HCT116 (cell line): ENCODE measurements at regions of chr5 and their contacts with region 1.

Region 1: DNA sequence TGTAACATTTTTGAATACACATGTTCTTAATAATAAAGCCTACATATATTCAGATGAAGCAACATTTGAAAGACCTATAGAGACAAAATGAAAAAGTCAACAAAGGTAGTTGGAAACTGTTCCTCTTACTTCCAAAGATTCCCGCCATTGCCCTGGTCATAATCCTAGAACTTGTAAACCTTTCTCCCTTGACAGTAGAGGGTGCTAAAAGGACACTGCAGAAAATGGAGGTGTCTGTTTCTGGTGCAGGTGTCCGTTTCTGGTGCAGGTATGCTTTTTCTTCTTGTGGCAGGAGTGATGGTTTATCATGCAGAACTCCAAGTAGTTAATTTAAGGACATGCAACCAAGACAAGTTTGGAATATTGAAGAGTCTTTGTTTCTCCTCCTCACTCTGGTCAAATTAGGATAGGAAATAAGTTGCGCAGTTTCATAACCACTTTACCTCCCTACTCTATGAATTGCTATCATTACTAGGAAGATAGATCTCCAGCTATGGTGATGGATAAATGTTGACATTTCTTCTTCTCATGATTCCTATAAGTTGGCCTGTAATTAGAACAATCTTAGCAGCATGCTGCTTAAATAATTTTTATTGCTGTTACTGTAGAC is 56.0 kb upstream of the FAM174A start:
- DNase-seq: peak; percentile 43
- ATAC-seq: peak; percentile 84
- H3K4me3 ChIP-seq: no peak overlapping the region
- H3K27ac ChIP-seq: no peak overlapping the region
- H3K4me1 ChIP-seq: no peaks in the 10 kb centered on the region
- H3K27me3 ChIP-seq: no peaks in the 10 kb centered on the region
- CTCF ChIP-seq: peak; percentile 57 to 64 (median 61); a peak in 5 of 6 replicates
- POLR2A ChIP-seq: no peak
- RAD21 ChIP-seq: peak; percentile 82

Region 2: GRCh38 chr5:100299261-100299660 is 179.9 kb before region 1 on chr5:
- CTCF ChIA-PET with region 1: no interaction called
- POLR2A ChIA-PET with region 1: no interaction called
- RAD21 ChIA-PET with region 1: no interaction called
- intact Hi-C with region 1: no loop called
- DNase-seq: no peak
- ATAC-seq: no peak
- H3K4me3 ChIP-seq: no peak overlapping the region
- H3K27ac ChIP-seq: no peak overlapping the region
- H3K4me1 ChIP-seq: no peaks in the 10 kb centered on the region
- H3K27me3 ChIP-seq: no peaks in the 10 kb centered on the region
- CTCF ChIP-seq: no peak
- POLR2A ChIP-seq: no peak
- RAD21 ChIP-seq: no peak

Region 3: GRCh38 chr5:100505984-100506670 is 26.9 kb after region 1 on chr5:
- CTCF ChIA-PET with region 1: no interaction called
- POLR2A ChIA-PET with region 1: no interaction called
- RAD21 ChIA-PET with region 1: no interaction called
- intact Hi-C with region 1: no loop called
- DNase-seq: peak; percentile 31
- ATAC-seq: peak; percentile 63; the same call in 1 of the 2 replicates
- H3K4me3 ChIP-seq: no peak overlapping the region
- H3K27ac ChIP-seq: no peak overlapping the region
- H3K4me1 ChIP-seq: peaks cover 2 to 8% of the 10 kb centered on the region in 2 experiments; a peak in 3 of 4 replicates
- H3K27me3 ChIP-seq: no peaks in the 10 kb centered on the region
- CTCF ChIP-seq: no peak
- POLR2A ChIP-seq: no peak
- RAD21 ChIP-seq: no peak

Region 4: GRCh38 chr5:101045689-101046088 is 566.5 kb after region 1 on chr5:
- CTCF ChIA-PET with region 1: no interaction called
- POLR2A ChIA-PET with region 1: no interaction called
- RAD21 ChIA-PET with region 1: no interaction called
- intact Hi-C with region 1: loop called (anchors 2 kb)
- DNase-seq: peak; percentile 15
- ATAC-seq: no peak
- H3K4me3 ChIP-seq: no peak overlapping the region
- H3K27ac ChIP-seq: no peak overlapping the region
- H3K4me1 ChIP-seq: no peaks in the 10 kb centered on the region
- H3K27me3 ChIP-seq: no peaks in the 10 kb centered on the region
- CTCF ChIP-seq: peak in 2 of 3 experiments; percentile 43 to 50; a peak in 3 of 6 replicates
- POLR2A ChIP-seq: no peak
- RAD21 ChIP-seq: peak; percentile 69

Region 5: GRCh38 chr5:101390151-101390908 is 911.1 kb after region 1 on chr5:
- CTCF ChIA-PET with region 1: interaction called, 3 read pairs
- POLR2A ChIA-PET with region 1: no interaction called
- RAD21 ChIA-PET with region 1: no interaction called
- intact Hi-C with region 1: loop called (anchors 5 kb)
- DNase-seq: peak; percentile 57
- ATAC-seq: peak; percentile 69
- H3K4me3 ChIP-seq: no peak overlapping the region
- H3K27ac ChIP-seq: no peak overlapping the region
- H3K4me1 ChIP-seq: no peaks in the 10 kb centered on the region
- H3K27me3 ChIP-seq: no peaks in the 10 kb centered on the region
- CTCF ChIP-seq: peak; percentile 31 to 73 (median 58); a peak in 5 of 6 replicates
- POLR2A ChIP-seq: no peak
- RAD21 ChIP-seq: peak; percentile 74

Region 6: GRCh38 chr5:101678481-101679193 is 1199.5 kb after region 1 on chr5:
- CTCF ChIA-PET with region 1: no interaction called
- POLR2A ChIA-PET with region 1: no interaction called
- RAD21 ChIA-PET with region 1: no interaction called
- intact Hi-C with region 1: loop called (anchors 5 kb)
- DNase-seq: peak; percentile 59
- ATAC-seq: peak; percentile 98
- H3K4me3 ChIP-seq: peak overlapping the region in 1 of 2 experiments; percentile 34; a peak in 2 of 4 replicates
- H3K27ac ChIP-seq: no peak overlapping the region
- H3K4me1 ChIP-seq: peaks cover 0 to 5% of the 10 kb centered on the region in 2 experiments; a peak in 1 of 4 replicates
- H3K27me3 ChIP-seq: no peaks in the 10 kb centered on the region
- CTCF ChIP-seq: peak; percentile 36 to 96 (median 88); a peak in 5 of 6 replicates
- POLR2A ChIP-seq: no peak
- RAD21 ChIP-seq: peak; percentile 79

Region 7: DNA sequence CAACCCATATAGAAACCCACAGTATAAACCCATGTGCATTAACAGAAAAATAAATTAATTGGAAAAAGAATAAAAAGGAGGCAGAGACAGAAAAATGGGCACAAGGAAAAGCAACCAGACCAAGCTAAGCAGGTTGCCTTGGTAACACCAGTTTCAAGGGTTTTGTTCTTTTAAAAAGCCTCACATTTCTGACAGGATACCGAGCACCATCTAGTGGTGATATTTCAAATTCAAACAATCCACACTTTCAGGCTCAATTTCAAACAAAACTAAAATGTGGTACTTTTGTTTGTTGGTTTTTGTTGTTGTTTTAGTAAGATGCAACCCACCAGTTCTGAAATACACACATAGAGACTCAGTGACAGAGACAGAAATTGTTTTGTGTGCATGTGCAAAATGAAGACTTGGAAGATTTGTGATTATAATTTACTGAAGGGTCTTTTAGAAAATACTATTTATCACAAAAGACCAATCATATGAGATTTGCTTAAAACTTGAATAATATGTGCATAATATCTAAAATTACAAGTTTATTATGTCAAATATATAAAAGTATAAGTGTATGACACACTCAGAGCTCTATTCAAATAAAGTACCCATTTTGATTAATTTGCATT is 1498.7 kb after region 1 on chr5:
- CTCF ChIA-PET with region 1: no interaction called
- POLR2A ChIA-PET with region 1: no interaction called
- RAD21 ChIA-PET with region 1: no interaction called
- intact Hi-C with region 1: loop called (anchors 5 kb)
- DNase-seq: peak; percentile 54
- ATAC-seq: peak; percentile 65
- H3K4me3 ChIP-seq: no peak overlapping the region
- H3K27ac ChIP-seq: no peak overlapping the region
- H3K4me1 ChIP-seq: no peaks in the 10 kb centered on the region
- H3K27me3 ChIP-seq: no peaks in the 10 kb centered on the region
- CTCF ChIP-seq: peak; percentile 46 to 73 (median 64); a peak in 5 of 6 replicates
- POLR2A ChIP-seq: no peak
- RAD21 ChIP-seq: peak; percentile 70